ENCODE measurements at regions of chr12 and their contacts with region 1.

Region 1: DNA sequence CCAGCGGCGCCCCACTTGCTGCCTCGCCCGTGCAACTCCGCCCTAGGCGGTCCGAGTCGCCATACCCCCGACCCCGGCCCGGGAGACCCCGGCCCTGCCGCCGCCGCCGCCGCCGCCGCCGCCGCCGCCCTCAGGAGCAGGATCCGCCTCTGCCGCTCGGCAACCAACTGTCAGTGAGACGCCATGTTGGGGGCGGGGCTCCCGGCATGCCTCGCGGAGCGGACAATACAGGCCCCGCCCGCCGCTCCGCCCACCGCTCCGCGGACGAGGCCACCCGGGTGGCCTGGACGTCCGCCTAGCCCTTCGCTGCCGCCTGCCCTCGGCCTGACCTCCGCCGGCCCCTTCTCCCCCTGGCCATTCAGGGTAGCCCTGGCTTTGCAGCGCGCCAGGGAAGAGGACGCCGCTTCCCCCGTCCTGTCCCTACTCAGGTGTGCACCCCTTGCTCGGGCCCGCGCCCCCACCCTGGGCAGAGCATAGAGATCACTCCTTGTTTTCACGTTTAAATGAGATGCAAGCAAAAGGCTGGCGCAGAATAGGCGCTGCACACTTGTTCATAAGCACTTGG is at the start of gene HECTD4:
- DNase-seq: peak; percentile 95 to 97 (median 96)
- ATAC-seq: peak; percentile 96
- H3K4me3 ChIP-seq: peak within 1 kb of the TSS; percentile 98
- H3K27ac ChIP-seq: peak within 1 kb of the TSS; percentile 89
- H3K4me1 ChIP-seq: peaks cover 24 to 32% of the 10 kb centered on the region in 2 experiments
- H3K27me3 ChIP-seq: no peaks in the 10 kb centered on the region
- CTCF ChIP-seq: no peak
- EP300 ChIP-seq: no peak
- POLR2A ChIP-seq: peak; percentile 90
- RAD21 ChIP-seq: no peak
- polyA plus RNA-seq, gene HECTD4: 3.5 to 4.5 TPM

Region 2: DNA sequence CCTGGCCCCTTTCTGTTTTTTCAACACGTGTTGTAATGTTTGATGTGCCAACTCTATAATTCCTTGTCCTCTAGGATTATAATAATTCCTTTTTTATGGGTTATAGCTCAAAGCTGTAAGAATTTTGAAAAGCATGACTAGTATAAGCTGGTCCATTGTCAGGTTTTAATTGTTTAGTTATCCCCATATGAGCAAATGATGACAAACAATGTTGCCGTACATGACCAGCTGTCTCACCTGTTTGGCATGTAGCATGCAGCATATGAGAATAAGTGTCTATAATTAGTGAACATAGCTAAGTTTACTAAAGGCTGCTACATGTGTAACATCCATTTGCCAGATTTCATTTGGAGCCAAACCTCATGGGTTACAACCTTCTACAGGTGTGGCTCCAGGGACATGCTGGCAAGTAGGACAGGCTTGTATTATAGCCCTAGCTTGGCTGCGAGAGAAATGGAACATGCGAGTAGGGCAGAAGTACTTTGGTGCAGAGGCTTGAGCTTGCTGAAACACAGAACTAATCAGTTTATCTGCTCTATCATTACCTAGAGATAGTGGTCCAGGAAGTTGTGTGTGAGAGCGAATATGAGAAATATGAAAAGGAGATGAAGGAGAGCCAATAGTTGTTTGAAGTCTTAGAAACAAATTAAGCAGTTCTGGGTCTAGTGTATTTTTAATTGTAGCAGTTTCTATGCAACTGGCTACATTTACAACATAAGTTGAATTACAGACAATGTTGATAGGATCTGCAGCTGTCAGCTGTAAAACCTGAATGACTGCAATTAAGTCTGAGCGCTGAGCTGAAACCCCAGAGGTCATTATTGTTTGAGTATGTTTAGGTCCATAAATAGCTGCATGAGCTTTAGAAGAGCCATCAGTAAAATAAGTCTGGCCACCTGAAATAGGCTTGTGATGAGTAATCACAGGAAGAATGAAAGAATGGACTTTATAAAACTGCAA is 562.8 kb before region 1 on chr12:
- CTCF ChIA-PET with region 1: no interaction called
- POLR2A ChIA-PET with region 1: no interaction called
- in situ Hi-C with region 1: no loop called
- intact Hi-C with region 1: loop called (anchors 2 kb)
- DNase-seq: no peak
- ATAC-seq: no peak
- H3K4me3 ChIP-seq: no peak overlapping the region
- H3K27ac ChIP-seq: no peak overlapping the region
- H3K4me1 ChIP-seq: peaks cover 0 to 3% of the 10 kb centered on the region in 2 experiments; a peak in 1 of 5 replicates
- H3K27me3 ChIP-seq: peaks cover 0 to 10% of the 10 kb centered on the region in 2 experiments; a peak in 4 of 5 replicates
- CTCF ChIP-seq: no peak
- EP300 ChIP-seq: no peak
- POLR2A ChIP-seq: no peak
- RAD21 ChIP-seq: no peak

Region 3: DNA sequence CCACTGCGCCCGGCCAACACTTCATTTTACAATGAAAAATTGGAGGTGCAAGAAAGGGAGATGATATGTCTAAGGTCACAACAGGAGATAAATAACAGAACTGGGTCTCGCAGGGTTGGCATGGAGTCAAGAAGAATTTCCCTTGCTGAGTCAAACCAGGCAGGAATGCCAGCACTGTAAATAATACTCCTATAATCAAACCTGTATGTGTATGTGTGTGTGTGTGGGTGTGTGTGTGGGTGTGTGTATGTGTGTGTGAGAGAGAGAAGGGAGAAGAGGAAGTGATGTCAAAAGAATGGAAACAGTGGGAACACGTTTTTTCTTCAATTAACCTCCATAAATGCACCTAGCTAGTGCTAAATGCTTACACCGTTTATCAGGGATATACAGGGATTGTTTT is 439.8 kb before region 1 on chr12:
- CTCF ChIA-PET with region 1: no interaction called
- POLR2A ChIA-PET with region 1: no interaction called
- in situ Hi-C with region 1: no loop called
- intact Hi-C with region 1: loop called (anchors 1 kb)
- DNase-seq: no peak
- ATAC-seq: no peak
- H3K4me3 ChIP-seq: no peak overlapping the region
- H3K27ac ChIP-seq: no peak overlapping the region
- H3K4me1 ChIP-seq: peaks cover 0 to 3% of the 10 kb centered on the region in 2 experiments; a peak in 1 of 5 replicates
- H3K27me3 ChIP-seq: no peaks in the 10 kb centered on the region
- CTCF ChIP-seq: no peak
- EP300 ChIP-seq: no peak
- POLR2A ChIP-seq: no peak
- RAD21 ChIP-seq: no peak

Region 4: GRCh38 chr12:112116232-112117060 is 265.9 kb before region 1 on chr12:
- CTCF ChIA-PET with region 1: no interaction called
- POLR2A ChIA-PET with region 1: no interaction called
- in situ Hi-C with region 1: no loop called
- intact Hi-C with region 1: loop called (anchors 10 kb)
- DNase-seq: peak; percentile 70 to 96 (median 80)
- ATAC-seq: peak; percentile 98
- H3K4me3 ChIP-seq: no peak overlapping the region
- H3K27ac ChIP-seq: peak overlapping the region; percentile 78
- H3K4me1 ChIP-seq: peaks cover 21 to 25% of the 10 kb centered on the region in 2 experiments
- H3K27me3 ChIP-seq: no peaks in the 10 kb centered on the region
- CTCF ChIP-seq: no peak
- EP300 ChIP-seq: peak; percentile 55
- POLR2A ChIP-seq: peak; percentile 83
- RAD21 ChIP-seq: no peak

Region 5: DNA sequence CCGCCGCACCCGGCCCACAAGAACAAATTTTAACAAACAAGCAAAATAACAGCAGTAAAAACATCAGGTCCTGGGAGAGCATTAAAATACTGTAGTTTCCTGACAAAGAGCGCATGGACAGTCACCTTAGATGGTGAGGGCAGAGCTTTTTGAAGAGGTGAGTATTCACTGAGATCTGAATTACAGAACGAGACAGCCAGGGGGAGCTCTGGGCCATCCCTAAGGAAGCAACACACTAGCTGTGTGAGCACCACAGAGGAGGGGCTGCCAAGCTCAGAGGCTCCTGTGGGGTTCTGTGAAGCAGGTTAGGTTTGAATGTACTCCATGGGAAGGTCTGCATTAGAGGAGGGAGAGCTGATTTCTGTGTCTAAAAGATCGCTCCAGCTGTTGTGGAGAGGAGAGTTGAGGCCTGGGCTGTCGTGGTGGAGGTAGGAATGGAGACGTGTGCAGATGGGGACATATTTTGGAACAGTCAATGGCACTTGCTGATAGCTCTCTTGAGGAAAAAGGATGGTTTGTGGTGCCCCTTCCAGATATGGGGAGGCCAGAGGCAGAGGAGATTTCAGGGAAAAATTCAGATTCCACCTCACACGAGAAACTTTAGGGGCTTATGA is 184.1 kb before region 1 on chr12:
- CTCF ChIA-PET with region 1: interaction called, 15 read pairs
- POLR2A ChIA-PET with region 1: interaction called, 3 read pairs
- in situ Hi-C with region 1: loop called (anchors 5 kb)
- intact Hi-C with region 1: loop called (anchors 1 kb)
- DNase-seq: peak; percentile 31 to 77 (median 58)
- ATAC-seq: peak; percentile 100
- H3K4me3 ChIP-seq: no peak overlapping the region
- H3K27ac ChIP-seq: no peak overlapping the region
- H3K4me1 ChIP-seq: peaks cover 0 to 3% of the 10 kb centered on the region in 2 experiments; a peak in 2 of 5 replicates
- H3K27me3 ChIP-seq: no peaks in the 10 kb centered on the region
- CTCF ChIP-seq: peak; percentile 72 to 84 (median 81)
- EP300 ChIP-seq: no peak
- POLR2A ChIP-seq: no peak
- RAD21 ChIP-seq: peak; percentile 54 to 80

Region 6: DNA sequence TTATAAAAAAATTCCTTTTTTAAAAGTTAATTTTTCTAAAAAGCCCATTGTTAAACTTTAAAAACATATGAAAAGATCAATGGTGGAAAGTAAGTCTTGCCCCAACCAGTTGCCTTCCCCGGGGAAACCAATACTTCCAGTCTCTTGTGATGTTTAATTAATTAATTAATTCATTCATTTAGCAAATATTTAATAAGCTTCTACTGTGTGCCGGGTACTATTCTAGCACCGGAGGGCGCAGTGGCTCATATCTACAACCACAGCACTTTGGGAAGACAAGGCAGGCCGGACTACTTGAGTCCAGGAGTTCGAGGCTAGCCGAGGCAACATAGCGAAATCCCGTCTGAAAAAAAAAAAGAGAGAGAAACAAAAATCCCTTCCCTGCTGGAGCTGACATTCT is 87.5 kb before region 1 on chr12:
- CTCF ChIA-PET with region 1: interaction called, 3 read pairs
- POLR2A ChIA-PET with region 1: interaction called, 4 read pairs
- in situ Hi-C with region 1: no loop called
- intact Hi-C with region 1: loop called (anchors 1 kb)
- DNase-seq: peak in 2 of 4 experiments; percentile 23 to 29
- ATAC-seq: peak; percentile 61; the same call in 2 of the 3 replicates
- H3K4me3 ChIP-seq: no peak overlapping the region
- H3K27ac ChIP-seq: no peak overlapping the region
- H3K4me1 ChIP-seq: no peaks in the 10 kb centered on the region
- H3K27me3 ChIP-seq: no peaks in the 10 kb centered on the region
- CTCF ChIP-seq: peak in 2 of 3 experiments; percentile 37 to 56; a peak in 3 of 6 replicates
- EP300 ChIP-seq: no peak
- POLR2A ChIP-seq: no peak
- RAD21 ChIP-seq: peak; percentile 27 to 46; a peak in 3 of 4 replicates

Region 7: DNA sequence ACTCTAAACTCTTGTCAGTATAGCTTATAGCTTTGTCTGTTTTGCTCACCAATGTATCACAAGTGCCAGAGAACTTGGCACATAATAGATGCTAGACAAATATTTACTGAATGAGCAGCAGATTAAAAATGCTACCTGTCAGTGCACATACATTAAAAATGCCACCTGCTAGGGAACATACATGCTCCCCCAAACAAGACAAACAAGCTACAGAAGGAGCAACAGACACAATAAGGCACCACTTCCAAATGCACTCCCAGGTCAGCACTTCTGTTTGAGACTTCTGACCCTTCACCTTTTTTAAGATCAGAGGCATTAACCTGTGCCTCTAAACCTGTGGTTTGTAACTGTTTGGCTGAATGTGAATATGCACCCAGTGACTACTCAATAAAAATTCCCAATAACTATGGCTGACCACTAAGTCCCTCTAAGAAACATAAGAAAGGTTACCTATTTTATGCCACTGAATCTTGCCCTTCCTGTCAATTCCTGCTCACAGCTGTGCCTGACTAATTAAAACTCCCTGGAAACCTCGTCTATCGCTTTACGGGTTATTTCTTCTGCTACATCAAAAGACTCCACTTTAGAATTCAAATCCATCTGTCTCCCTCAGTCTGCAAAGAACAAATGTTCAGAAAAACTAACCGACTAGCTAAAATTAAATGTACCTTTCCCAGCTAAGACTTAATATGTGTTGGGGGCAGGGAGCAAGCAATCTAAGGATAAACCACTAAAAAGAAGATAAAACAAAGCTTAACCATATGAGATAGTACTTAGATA is 41.1 kb before region 1 on chr12:
- CTCF ChIA-PET with region 1: no interaction called
- POLR2A ChIA-PET with region 1: no interaction called
- in situ Hi-C with region 1: no loop called
- intact Hi-C with region 1: loop called (anchors 2 kb)
- DNase-seq: no peak
- ATAC-seq: no peak
- H3K4me3 ChIP-seq: no peak overlapping the region
- H3K27ac ChIP-seq: no peak overlapping the region
- H3K4me1 ChIP-seq: peaks cover 8 to 11% of the 10 kb centered on the region in 2 experiments; a peak in 4 of 5 replicates
- H3K27me3 ChIP-seq: no peaks in the 10 kb centered on the region
- CTCF ChIP-seq: no peak
- EP300 ChIP-seq: no peak
- POLR2A ChIP-seq: no peak
- RAD21 ChIP-seq: no peak

Region 8: DNA sequence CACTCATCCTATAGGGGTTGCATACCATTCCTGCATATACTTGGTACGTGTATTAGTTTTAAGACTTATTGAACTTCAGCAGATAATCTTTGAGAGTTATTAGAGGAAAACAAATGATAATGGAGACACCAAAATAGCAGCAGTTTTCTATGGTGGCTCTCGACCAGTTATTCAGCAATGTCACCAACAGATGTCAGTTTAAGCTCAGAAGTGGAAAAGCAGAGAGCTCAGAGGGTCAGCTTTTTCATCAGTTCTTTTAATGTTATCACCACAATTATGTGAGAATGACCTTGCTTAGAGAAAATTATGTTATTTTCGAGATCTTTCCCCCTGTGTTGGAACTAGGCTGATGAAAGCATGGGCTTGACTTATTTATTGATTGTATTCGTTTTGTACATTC is 68.4 kb after region 1 on chr12:
- CTCF ChIA-PET with region 1: no interaction called
- POLR2A ChIA-PET with region 1: no interaction called
- in situ Hi-C with region 1: no loop called
- intact Hi-C with region 1: no loop called
- DNase-seq: no peak
- ATAC-seq: no peak
- H3K4me3 ChIP-seq: no peak overlapping the region
- H3K27ac ChIP-seq: no peak overlapping the region
- H3K4me1 ChIP-seq: peaks cover 2 to 8% of the 10 kb centered on the region in 2 experiments; a peak in 3 of 5 replicates
- H3K27me3 ChIP-seq: no peaks in the 10 kb centered on the region
- CTCF ChIP-seq: 0 out of 6 replicates have a peak, but pooled peaks of 1 of the 3 experiments have one; percentile 11
- EP300 ChIP-seq: no peak
- POLR2A ChIP-seq: no peak
- RAD21 ChIP-seq: 0 out of 4 replicates have a peak, but pooled peaks of 1 of the 2 experiments have one; percentile 13

Region 9: DNA sequence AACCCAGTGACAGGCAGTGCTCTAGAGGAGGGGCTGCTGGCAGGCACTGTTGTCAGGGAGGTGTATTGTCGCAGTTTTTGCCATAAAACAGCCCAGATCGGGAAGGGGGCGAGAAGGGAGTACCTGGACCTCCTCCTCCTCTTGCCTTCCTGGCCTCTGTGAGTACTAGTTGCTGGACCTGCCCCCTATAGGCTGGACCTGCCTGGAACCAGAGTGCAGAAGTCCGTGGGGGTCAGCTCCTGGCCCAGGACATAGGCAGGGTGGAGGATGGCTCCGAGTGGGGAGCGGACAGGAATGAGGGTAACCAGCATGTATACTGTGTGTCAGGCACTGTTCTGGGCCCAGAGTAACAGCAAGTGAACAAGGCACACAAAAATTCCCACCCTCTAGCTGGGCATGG is 152.7 kb after region 1 on chr12:
- CTCF ChIA-PET with region 1: no interaction called
- POLR2A ChIA-PET with region 1: no interaction called
- in situ Hi-C with region 1: no loop called
- intact Hi-C with region 1: no loop called
- DNase-seq: no peak
- ATAC-seq: peak; percentile 43
- H3K4me3 ChIP-seq: no peak overlapping the region
- H3K27ac ChIP-seq: no peak overlapping the region
- H3K4me1 ChIP-seq: no peaks in the 10 kb centered on the region; a peak in 1 of 5 replicates
- H3K27me3 ChIP-seq: peaks cover 15 to 50% of the 10 kb centered on the region in 2 experiments; a peak in 4 of 5 replicates
- CTCF ChIP-seq: no peak
- EP300 ChIP-seq: no peak
- POLR2A ChIP-seq: no peak
- RAD21 ChIP-seq: no peak

Region 10: GRCh38 chr12:112837629-112838197 is 455.4 kb after region 1 on chr12:
- CTCF ChIA-PET with region 1: no interaction called
- POLR2A ChIA-PET with region 1: no interaction called
- in situ Hi-C with region 1: no loop called
- intact Hi-C with region 1: no loop called
- DNase-seq: peak in 1 of 4 experiments; percentile 11
- ATAC-seq: no peak
- H3K4me3 ChIP-seq: no peak overlapping the region
- H3K27ac ChIP-seq: no peak overlapping the region
- H3K4me1 ChIP-seq: peaks cover 0 to 9% of the 10 kb centered on the region in 2 experiments; a peak in 2 of 5 replicates
- H3K27me3 ChIP-seq: peaks cover 3 to 4% of the 10 kb centered on the region in 2 experiments; a peak in 2 of 5 replicates
- CTCF ChIP-seq: no peak
- EP300 ChIP-seq: no peak
- POLR2A ChIP-seq: no peak
- RAD21 ChIP-seq: no peak

Measured in K562 (cell line).